ENCODE measurements at regions of chr7 and their contacts with region 1.

Region 1: GRCh38 chr7:24279512-24279911 is 4.5 kb upstream of the NPY start:
- DNase-seq: no peak
- H3K4me3 ChIP-seq: no peak overlapping the region
- H3K27ac ChIP-seq: no peak overlapping the region
- H3K4me1 ChIP-seq: peaks cover 0 to 11% (median 5%) of the 10 kb centered on the region in 4 donors
- H3K27me3 ChIP-seq: peaks cover 0 to 29% of the 10 kb centered on the region in 2 donors
- CTCF ChIP-seq: no peak

Region 2: DNA sequence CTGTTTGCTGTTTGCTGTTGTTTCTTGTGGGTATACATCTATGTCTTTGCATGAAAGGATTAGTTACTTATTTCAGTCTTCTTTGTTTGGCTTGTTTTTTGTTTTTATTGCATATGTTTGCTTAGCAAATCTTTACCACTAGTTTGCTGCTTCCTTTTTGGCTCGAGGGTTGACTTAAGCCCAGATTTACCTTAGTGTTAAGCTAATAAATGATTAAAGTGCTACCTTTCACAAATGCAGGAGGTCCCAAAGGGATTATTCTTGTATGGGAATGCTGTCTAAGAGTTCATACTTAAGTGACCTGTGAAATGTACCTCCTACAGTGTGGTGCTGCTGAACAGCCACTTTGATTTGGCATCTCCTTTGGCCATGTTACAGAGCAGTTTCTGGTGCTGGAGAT is 269.0 kb before region 1 on chr7:
- intact Hi-C with region 1: loop called (anchors 5 kb)
- DNase-seq: no peak
- H3K4me3 ChIP-seq: no peak overlapping the region
- H3K27ac ChIP-seq: no peak overlapping the region
- H3K4me1 ChIP-seq: no peaks in the 10 kb centered on the region
- H3K27me3 ChIP-seq: no peaks in the 10 kb centered on the region
- CTCF ChIP-seq: no peak

Region 3: GRCh38 chr7:24441314-24442027 is 162.0 kb after region 1 on chr7:
- intact Hi-C with region 1: no loop called
- DNase-seq: no peak
- H3K4me3 ChIP-seq: no peak overlapping the region
- H3K27ac ChIP-seq: no peak overlapping the region
- H3K4me1 ChIP-seq: no peaks in the 10 kb centered on the region
- H3K27me3 ChIP-seq: no peaks in the 10 kb centered on the region
- CTCF ChIP-seq: no peak

Region 4: GRCh38 chr7:24455813-24456525 is 176.5 kb after region 1 on chr7:
- intact Hi-C with region 1: no loop called
- DNase-seq: no peak
- H3K4me3 ChIP-seq: no peak overlapping the region
- H3K27ac ChIP-seq: no peak overlapping the region
- H3K4me1 ChIP-seq: no peaks in the 10 kb centered on the region
- H3K27me3 ChIP-seq: no peaks in the 10 kb centered on the region
- CTCF ChIP-seq: no peak

Measured in tibial artery (tissue), 4 donors.